ENCODE measurements at regions of chr2 and their contacts with region 1.

Region 1: DNA sequence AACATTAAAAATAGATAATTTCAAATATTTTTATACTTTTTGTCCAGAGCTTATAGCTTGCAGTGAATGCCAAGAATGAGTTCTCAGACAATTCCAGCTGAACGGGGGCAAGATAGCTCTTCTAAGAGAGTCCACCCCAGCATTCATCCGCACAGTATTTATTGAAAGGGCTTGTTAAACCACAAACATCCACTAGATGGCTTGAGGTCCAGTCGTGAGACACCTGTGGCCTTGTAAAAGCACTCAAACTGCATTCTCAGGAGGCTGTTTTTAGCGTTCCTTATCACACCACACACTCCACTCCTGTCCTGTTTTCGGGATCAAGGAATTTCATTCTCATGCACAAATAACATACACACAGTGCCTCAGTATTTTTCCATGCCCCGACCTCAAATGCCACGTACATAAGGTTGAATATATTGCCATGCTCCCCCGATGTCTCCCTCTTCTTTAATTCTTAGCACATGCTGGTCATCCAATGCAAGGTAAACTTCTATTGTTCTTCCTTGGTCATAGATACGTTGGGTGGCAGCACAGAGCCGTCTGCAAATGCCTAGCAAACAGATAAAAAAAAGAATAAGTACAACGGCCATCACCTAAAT is 47.4 kb downstream of the DNAJC10 start:
- DNase-seq: no peak
- H3K4me3 ChIP-seq: no peak overlapping the region
- H3K27ac ChIP-seq: no peak overlapping the region
- H3K4me1 ChIP-seq: no peaks in the 10 kb centered on the region
- H3K27me3 ChIP-seq: no peaks in the 10 kb centered on the region
- CTCF ChIP-seq: peak in 2 of 3 experiments; percentile 64; a peak in 3 of 4 replicates
- EP300 ChIP-seq: no peak
- POLR2A ChIP-seq: no peak
- RAD21 ChIP-seq: peak; percentile 40 to 59; a peak in 3 of 4 replicates

Region 2: DNA sequence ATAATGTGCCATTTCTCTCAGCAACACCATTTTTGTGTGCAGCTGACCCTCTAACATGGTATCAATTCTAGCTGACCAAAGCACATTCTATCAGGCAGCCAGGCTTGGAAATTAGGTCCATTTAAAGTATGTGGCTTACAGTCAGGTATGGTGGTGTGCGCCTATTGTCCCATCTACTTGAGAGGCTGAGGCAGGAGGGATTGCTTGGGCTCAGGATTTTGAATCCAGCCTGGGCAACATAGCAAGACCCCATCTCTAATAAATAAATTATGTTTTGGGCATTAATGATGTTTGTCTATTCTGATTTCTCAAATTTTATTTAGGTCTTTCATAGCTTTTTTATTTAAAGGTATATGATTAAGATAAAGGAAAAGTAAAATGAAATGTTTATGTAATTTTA is 15.9 kb after region 1 on chr2:
- CTCF ChIA-PET with region 1: interaction called, 13 read pairs
- POLR2A ChIA-PET with region 1: interaction called, 3 read pairs
- DNase-seq: no peak
- H3K4me3 ChIP-seq: no peak overlapping the region
- H3K27ac ChIP-seq: no peak overlapping the region
- H3K4me1 ChIP-seq: no peaks in the 10 kb centered on the region
- H3K27me3 ChIP-seq: no peaks in the 10 kb centered on the region
- CTCF ChIP-seq: no peak
- EP300 ChIP-seq: no peak
- POLR2A ChIP-seq: no peak
- RAD21 ChIP-seq: no peak

Region 3: GRCh38 chr2:182798736-182799135 is 35.3 kb after region 1 on chr2:
- CTCF ChIA-PET with region 1: interaction called, 11 read pairs
- POLR2A ChIA-PET with region 1: no interaction called
- DNase-seq: no peak
- H3K4me3 ChIP-seq: no peak overlapping the region
- H3K27ac ChIP-seq: no peak overlapping the region
- H3K4me1 ChIP-seq: no peaks in the 10 kb centered on the region
- H3K27me3 ChIP-seq: no peaks in the 10 kb centered on the region
- CTCF ChIP-seq: no peak
- EP300 ChIP-seq: no peak
- POLR2A ChIP-seq: no peak
- RAD21 ChIP-seq: no peak

Measured in H1 (cell line).